GM10248 (cell line): ENCODE measurements at regions of chr17 and their contacts with region 1.

Region 1: DNA sequence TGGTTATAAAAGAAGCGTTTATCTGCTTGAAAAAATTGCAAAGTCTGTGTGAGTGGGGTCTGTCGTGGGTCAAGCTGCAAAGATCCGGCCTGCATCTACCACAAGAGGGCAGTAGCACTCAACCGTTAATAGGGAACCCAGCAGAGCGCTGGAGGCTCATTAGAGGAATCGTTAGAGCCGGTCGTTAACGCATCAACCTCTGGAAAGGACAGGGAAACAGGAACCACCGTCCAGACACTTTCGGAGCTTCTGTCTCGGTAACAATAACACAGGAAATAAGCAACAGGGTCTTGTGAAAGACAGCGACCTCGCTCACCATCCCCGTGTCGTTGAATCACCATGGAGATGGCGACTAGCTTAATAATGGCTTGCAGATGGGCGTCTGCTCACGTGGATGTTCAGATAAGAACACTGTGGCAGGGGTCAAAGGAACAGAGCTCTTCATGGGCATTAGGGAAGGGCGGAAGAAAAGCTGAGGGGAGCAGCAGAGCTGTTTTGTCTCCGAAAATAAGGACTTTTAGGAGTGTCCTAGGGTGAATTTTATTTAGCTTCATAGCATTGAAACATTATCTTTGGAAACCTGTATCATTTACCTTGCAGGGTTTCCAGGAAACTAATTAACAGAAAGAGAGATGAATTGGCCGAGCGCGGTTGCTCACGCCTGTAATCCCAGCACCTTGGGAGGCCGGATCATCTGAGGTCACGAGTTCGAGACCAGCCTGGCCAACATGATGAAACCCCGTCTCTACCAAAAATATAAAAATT is 11.9 kb upstream of the NSRP1 start:
- DNase-seq: peak; percentile 71
- CTCF ChIP-seq: peak; percentile 80

Region 2: GRCh38 chr17:29977836-29978235 is 126.9 kb before region 1 on chr17:
- CTCF ChIA-PET with region 1: no interaction called
- POLR2A ChIA-PET with region 1: no interaction called
- DNase-seq: no peak
- CTCF ChIP-seq: no peak

Region 3: DNA sequence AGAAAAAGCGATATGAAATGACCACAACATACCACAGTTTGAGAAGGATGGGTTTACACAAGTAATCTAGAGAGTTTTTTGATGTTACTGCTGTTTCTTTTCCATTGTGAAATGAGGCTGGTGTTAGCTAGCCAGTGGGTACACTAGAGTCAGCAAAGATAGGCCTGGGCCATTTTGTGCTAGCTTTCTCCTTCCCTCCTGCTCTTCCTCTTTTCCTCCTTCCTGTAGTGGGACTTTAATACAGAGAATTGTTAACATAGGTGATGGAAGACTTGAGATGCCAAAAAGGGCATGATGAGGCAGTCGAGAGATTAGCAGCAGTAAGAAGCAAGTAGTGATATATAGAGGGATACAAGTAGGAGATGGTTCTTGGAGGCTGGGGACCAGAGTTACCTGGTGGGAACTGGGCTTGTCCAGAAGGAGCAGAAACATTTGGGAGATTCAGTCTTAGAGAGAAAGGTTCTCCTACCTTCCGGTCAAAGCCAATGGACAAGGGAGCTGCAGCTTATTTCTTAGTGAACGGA is 19.6 kb after region 1 on chr17:
- CTCF ChIA-PET with region 1: interaction called, 50 read pairs
- POLR2A ChIA-PET with region 1: no interaction called
- DNase-seq: no peak
- CTCF ChIP-seq: no peak

Region 4: GRCh38 chr17:30187573-30187972 is 82.8 kb after region 1 on chr17:
- CTCF ChIA-PET with region 1: no interaction called
- POLR2A ChIA-PET with region 1: no interaction called
- DNase-seq: no peak
- CTCF ChIP-seq: no peak

Region 5: GRCh38 chr17:30236766-30237165 is 132.0 kb after region 1 on chr17:
- CTCF ChIA-PET with region 1: interaction called, 51 read pairs
- POLR2A ChIA-PET with region 1: no interaction called
- DNase-seq: peak; percentile 73
- CTCF ChIP-seq: peak; percentile 39

Region 6: DNA sequence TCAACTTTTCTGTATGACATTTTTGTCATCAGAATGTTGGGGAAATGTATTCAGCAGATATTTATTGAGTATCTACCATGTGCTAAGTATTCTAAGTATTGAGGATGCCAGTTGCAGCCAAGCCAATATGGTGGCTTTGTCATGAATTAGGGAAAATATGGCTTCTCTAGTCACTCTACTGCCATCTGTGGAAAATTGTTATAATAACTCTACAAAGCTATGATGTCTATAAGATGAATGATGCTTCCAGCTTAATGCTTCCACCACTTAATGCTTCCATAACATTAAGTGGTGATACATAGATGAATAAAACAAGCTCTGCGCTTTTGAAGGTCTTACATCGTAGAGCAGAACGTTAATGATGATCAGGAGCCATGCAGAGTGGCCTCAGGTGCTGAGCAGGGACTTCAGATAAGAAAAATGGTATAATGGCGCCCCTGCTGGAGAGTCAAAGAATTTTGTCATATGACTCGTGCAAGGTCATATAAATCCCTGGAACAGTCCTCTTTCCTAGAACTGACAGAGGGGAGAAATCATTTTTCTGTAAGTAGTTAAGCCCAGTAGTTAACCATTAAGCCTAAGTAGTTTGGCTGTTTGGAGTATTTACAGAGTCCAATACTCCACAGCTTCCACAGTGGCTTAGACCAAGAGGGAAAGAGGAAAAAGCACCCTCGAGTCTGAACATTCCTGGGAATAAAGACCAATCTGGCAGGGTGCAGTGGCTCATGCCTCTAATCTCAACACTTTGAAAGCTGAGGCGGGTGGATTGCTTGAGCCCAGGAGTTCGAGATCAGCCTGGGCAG is 231.8 kb after region 1 on chr17:
- CTCF ChIA-PET with region 1: interaction called, 158 read pairs
- POLR2A ChIA-PET with region 1: no interaction called
- DNase-seq: peak; percentile 33
- CTCF ChIP-seq: peak; percentile 56

Region 7: GRCh38 chr17:30443721-30444120 is 339.0 kb after region 1 on chr17:
- CTCF ChIA-PET with region 1: no interaction called
- POLR2A ChIA-PET with region 1: no interaction called
- DNase-seq: no peak
- CTCF ChIP-seq: no peak

Region 8: DNA sequence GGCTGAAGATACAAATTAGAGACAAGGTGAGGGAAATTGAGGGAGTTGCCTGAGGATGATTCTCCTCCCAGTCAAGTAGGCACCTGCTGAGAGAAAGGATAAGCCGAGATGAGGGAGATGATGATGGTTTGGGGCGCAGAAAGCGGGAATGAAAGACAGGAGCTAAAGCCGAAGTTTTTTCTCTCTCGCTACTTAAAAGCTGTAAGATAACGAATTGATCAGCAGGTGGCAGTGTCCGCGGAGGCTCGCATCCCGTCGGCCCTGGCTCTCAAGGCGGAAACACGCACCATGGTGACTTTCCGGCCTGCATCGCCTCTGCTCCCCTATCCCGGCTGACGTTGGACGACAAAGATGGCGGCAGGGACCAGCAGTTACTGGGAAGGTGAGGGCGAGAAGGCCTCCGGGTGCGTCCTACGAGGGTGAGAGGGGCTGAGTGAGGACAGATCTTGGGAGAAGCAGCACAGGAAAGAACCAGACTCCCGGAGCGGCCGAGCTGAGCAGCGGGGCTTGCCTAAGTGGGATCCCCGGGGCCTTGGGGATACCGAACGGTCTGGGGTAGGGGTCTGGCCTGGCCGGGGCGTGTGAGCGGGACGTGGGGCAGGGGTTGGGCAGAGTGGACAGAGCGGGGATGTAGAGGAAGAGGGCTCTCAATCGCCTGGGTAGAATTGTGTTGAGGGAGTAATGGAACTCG is 372.5 kb after region 1 on chr17 and contains the start of gene GOSR1:
- CTCF ChIA-PET with region 1: interaction called, 12 read pairs
- POLR2A ChIA-PET with region 1: no interaction called
- DNase-seq: peak; percentile 92
- CTCF ChIP-seq: peak; percentile 85